Activated CD4-positive, alpha-beta memory T cell treated with anti-CD3 and anti-CD28 coated beads for 36 hours (primary cell): ENCODE measurements at regions of chr18 and their contacts with region 1.

Region 1: GRCh38 chr18:32072321-32072720 is 19.4 kb upstream of the RNF138 start:
- DNase-seq: no peak
- H3K4me3 Mint-ChIP-seq: no peak overlapping the region
- H3K27ac Mint-ChIP-seq: peak overlapping the region; percentile 13
- H3K4me1 Mint-ChIP-seq: peaks cover 27% of the 10 kb centered on the region
- H3K27me3 Mint-ChIP-seq: no peaks in the 10 kb centered on the region

Region 2: DNA sequence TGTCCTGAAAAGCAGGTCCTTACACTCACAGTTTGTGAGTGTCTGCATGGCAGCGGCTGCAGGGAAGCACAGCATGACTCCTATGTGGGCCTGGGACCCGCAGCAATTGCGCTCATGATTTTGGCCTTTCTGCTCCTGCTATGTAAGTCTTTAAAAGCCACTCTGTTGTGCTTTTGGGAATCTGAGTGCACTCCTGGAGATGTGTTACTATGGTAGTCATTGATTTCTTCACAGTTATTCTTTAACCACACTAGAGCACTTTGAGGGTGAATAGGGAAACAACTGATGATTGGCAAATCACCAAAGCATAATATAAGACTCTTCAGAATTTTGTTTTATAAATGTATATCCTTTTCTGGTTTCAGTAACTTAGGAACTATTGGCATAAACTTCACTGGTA is 533.5 kb before region 1 on chr18:
- CTCF ChIA-PET with region 1: no interaction called
- POLR2A ChIA-PET with region 1: no interaction called
- intact Hi-C with region 1: no loop called
- DNase-seq: no peak
- H3K4me3 Mint-ChIP-seq: no peak overlapping the region
- H3K27ac Mint-ChIP-seq: no peak overlapping the region
- H3K4me1 Mint-ChIP-seq: no peaks in the 10 kb centered on the region
- H3K27me3 Mint-ChIP-seq: peaks cover 5% of the 10 kb centered on the region

Region 3: GRCh38 chr18:32060026-32060425 is 12.3 kb before region 1 on chr18:
- CTCF ChIA-PET with region 1: interaction called, 16 read pairs
- POLR2A ChIA-PET with region 1: interaction called, 3 read pairs
- intact Hi-C with region 1: no loop called
- DNase-seq: no peak
- H3K4me3 Mint-ChIP-seq: no peak overlapping the region
- H3K27ac Mint-ChIP-seq: peak overlapping the region; percentile 71
- H3K4me1 Mint-ChIP-seq: peaks cover 41% of the 10 kb centered on the region
- H3K27me3 Mint-ChIP-seq: no peaks in the 10 kb centered on the region

Region 4: DNA sequence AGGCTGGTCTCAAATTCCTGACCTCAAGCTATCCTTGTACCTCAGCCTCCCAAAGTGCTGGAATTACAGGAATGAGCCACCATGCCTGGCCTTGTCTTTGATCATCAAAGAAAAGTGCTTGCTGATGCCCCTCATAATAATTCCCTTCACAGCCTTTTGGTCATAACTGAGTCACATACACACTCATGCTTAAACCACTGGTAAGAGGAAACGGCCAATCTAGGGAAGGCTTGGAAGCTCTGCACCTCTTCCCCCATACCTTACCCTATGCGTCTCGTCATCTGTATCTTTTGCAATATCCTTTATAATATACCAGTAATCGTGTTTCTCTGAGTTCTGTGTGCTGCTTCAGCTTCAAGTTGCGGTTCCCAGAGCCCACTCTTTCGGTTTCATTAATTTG is 14.5 kb after region 1 on chr18:
- CTCF ChIA-PET with region 1: interaction called, 10 read pairs
- POLR2A ChIA-PET with region 1: interaction called, 3 read pairs
- intact Hi-C with region 1: loop called (anchors 1 kb)
- DNase-seq: no peak
- H3K4me3 Mint-ChIP-seq: no peak overlapping the region
- H3K27ac Mint-ChIP-seq: no peak overlapping the region
- H3K4me1 Mint-ChIP-seq: peaks cover 35% of the 10 kb centered on the region
- H3K27me3 Mint-ChIP-seq: no peaks in the 10 kb centered on the region